MCF 10A (cell line): ENCODE measurements at regions of chr14 and their contacts with region 1.

Region 1: GRCh38 chr14:68248481-68249255 is 429.1 kb downstream of the RAD51B start:
- DNase-seq: peak; percentile 60
- H3K4me3 Mint-ChIP-seq: peak overlapping the region; percentile 21
- H3K27ac Mint-ChIP-seq: peak overlapping the region; percentile 80
- H3K4me1 Mint-ChIP-seq: peaks cover 57% of the 10 kb centered on the region
- H3K27me3 Mint-ChIP-seq: no peaks in the 10 kb centered on the region
- CTCF ChIP-seq: peak; percentile 67

Region 2: GRCh38 chr14:67934008-67934481 is 314.6 kb before region 1 on chr14:
- CTCF ChIA-PET with region 1: interaction called, 58 read pairs
- POLR2A ChIA-PET with region 1: interaction called, 6 read pairs
- intact Hi-C with region 1: loop called (anchors 2 kb)
- DNase-seq: peak; percentile 74
- H3K4me3 Mint-ChIP-seq: no peak overlapping the region
- H3K27ac Mint-ChIP-seq: peak overlapping the region; percentile 26
- H3K4me1 Mint-ChIP-seq: peaks cover 29% of the 10 kb centered on the region
- H3K27me3 Mint-ChIP-seq: no peaks in the 10 kb centered on the region
- CTCF ChIP-seq: peak; percentile 52

Region 3: GRCh38 chr14:68084256-68084655 is 164.4 kb before region 1 on chr14:
- CTCF ChIA-PET with region 1: interaction called, 3 read pairs
- POLR2A ChIA-PET with region 1: no interaction called
- intact Hi-C with region 1: loop called (anchors 5 kb)
- DNase-seq: peak; percentile 8
- H3K4me3 Mint-ChIP-seq: no peak overlapping the region
- H3K27ac Mint-ChIP-seq: no peak overlapping the region
- H3K4me1 Mint-ChIP-seq: peaks cover 18% of the 10 kb centered on the region
- H3K27me3 Mint-ChIP-seq: no peaks in the 10 kb centered on the region
- CTCF ChIP-seq: peak; percentile 12

Region 4: GRCh38 chr14:68232300-68233055 is 16.2 kb before region 1 on chr14:
- CTCF ChIA-PET with region 1: interaction called, 4 read pairs
- POLR2A ChIA-PET with region 1: interaction called, 22 read pairs
- intact Hi-C with region 1: no loop called
- DNase-seq: peak; percentile 99
- H3K4me3 Mint-ChIP-seq: no peak overlapping the region
- H3K27ac Mint-ChIP-seq: no peak overlapping the region
- H3K4me1 Mint-ChIP-seq: no peaks in the 10 kb centered on the region
- H3K27me3 Mint-ChIP-seq: no peaks in the 10 kb centered on the region
- CTCF ChIP-seq: no peak

Region 5: DNA sequence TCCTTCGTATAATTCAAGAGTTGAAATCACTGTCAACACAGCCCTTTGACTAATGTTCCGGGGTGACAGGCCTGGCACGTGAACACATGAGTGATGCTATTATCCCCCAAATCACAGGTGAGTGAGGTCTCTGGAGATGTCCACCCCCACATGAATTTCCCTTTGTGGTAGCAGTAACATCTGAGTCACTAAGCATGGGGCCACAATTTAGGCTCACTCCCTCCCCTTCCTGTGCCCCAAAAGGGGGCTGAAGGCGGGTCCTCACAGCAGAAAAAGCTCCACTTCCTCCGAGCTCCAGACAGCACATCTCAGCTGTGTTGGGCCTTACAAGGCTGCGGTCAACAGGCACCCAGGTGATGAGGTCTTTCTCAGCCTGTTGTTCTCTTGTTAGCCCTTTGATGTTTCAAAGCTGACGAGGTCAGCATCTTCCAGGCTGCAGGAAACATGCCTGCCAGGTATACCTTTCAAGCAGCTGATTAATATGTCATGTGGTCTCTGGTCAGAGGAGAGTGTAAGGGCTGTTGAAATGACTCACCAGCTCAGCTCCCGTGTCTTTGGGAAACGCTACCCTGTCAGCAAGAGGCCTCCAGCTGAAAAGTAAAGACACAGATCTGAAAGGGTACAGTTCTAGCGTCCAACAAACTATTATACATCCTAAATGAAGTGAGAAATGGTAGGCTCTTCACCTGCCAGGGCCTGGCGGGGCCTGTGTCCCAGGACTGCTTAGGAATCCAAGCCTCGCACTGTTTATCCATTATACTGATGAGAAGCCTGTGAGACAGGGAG is 436.9 kb after region 1 on chr14:
- CTCF ChIA-PET with region 1: interaction called, 4 read pairs
- POLR2A ChIA-PET with region 1: interaction called, 4 read pairs
- intact Hi-C with region 1: loop called (anchors 2 kb)
- DNase-seq: peak; percentile 91
- H3K4me3 Mint-ChIP-seq: peak overlapping the region; percentile 1
- H3K27ac Mint-ChIP-seq: peak overlapping the region; percentile 96
- H3K4me1 Mint-ChIP-seq: peaks cover 67% of the 10 kb centered on the region
- H3K27me3 Mint-ChIP-seq: no peaks in the 10 kb centered on the region
- CTCF ChIP-seq: no peak

Region 6: GRCh38 chr14:68816262-68816942 is 567.7 kb after region 1 on chr14:
- CTCF ChIA-PET with region 1: interaction called, 128 read pairs
- POLR2A ChIA-PET with region 1: interaction called, 86 read pairs
- intact Hi-C with region 1: loop called (anchors 1 kb)
- DNase-seq: peak; percentile 85
- H3K4me3 Mint-ChIP-seq: peak overlapping the region; percentile 49
- H3K27ac Mint-ChIP-seq: peak overlapping the region; percentile 88
- H3K4me1 Mint-ChIP-seq: peaks cover 20% of the 10 kb centered on the region
- H3K27me3 Mint-ChIP-seq: no peaks in the 10 kb centered on the region
- CTCF ChIP-seq: peak; percentile 98